A673 (cell line): ENCODE measurements at regions of chr13 and their contacts with region 1.

Region 1: GRCh38 chr13:41061075-41061913 is at the start of gene WBP4:
- DNase-seq: peak; percentile 95
- H3K4me3 ChIP-seq: peak within 1 kb of the TSS; percentile 83
- H3K27ac ChIP-seq: peak within 1 kb of the TSS; percentile 97
- H3K4me1 ChIP-seq: peaks cover 16% of the 10 kb centered on the region
- H3K27me3 ChIP-seq: no peaks in the 10 kb centered on the region
- CTCF ChIP-seq: 0 out of 2 replicates have a peak, but pooled peaks have one; percentile 19
- total RNA-seq, gene WBP4: 11.9 and 12.5 TPM in 2 replicates

Region 2: DNA sequence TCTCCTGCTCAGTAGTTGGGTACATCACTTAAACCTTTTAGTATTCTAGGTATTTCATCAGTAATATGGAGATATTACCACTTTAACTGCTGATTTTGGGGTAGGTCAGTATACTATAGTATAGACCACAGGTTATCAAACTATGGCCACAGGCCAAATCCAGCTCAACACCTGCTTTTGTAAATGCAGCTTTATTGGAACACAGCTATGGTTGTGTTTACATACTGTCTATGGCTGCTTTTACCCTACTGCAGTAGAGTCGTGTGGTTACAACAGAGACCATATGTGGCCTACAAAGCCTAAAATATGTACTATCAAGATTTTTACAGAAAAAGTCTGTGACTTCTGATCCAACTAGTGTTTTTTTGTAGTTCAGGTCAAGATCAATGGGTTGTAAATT is 1395.5 kb before region 1 on chr13:
- CTCF ChIA-PET with region 1: no interaction called
- POLR2A ChIA-PET with region 1: no interaction called
- intact Hi-C with region 1: no loop called
- DNase-seq: no peak
- H3K4me3 ChIP-seq: no peak overlapping the region
- H3K27ac ChIP-seq: no peak overlapping the region
- H3K4me1 ChIP-seq: peaks cover 8% of the 10 kb centered on the region
- H3K27me3 ChIP-seq: no peaks in the 10 kb centered on the region
- CTCF ChIP-seq: no peak

Region 3: GRCh38 chr13:40895227-40896184 is 165.8 kb before region 1 on chr13:
- CTCF ChIA-PET with region 1: no interaction called
- POLR2A ChIA-PET with region 1: no interaction called
- intact Hi-C with region 1: no loop called
- DNase-seq: no peak
- H3K4me3 ChIP-seq: no peak overlapping the region
- H3K27ac ChIP-seq: no peak overlapping the region
- H3K4me1 ChIP-seq: no peaks in the 10 kb centered on the region
- H3K27me3 ChIP-seq: no peaks in the 10 kb centered on the region
- CTCF ChIP-seq: no peak

Region 4: GRCh38 chr13:40982772-40983171 is 78.5 kb before region 1 on chr13:
- CTCF ChIA-PET with region 1: no interaction called
- POLR2A ChIA-PET with region 1: no interaction called
- intact Hi-C with region 1: loop called (anchors 2 kb)
- DNase-seq: peak; percentile 93
- H3K4me3 ChIP-seq: peak overlapping the region; percentile 50
- H3K27ac ChIP-seq: peak overlapping the region; percentile 93
- H3K4me1 ChIP-seq: peaks cover 37% of the 10 kb centered on the region
- H3K27me3 ChIP-seq: no peaks in the 10 kb centered on the region
- CTCF ChIP-seq: no peak

Region 5: GRCh38 chr13:41132512-41133152 is 71.3 kb after region 1 on chr13 and contains the start of gene KBTBD6:
- CTCF ChIA-PET with region 1: no interaction called
- POLR2A ChIA-PET with region 1: no interaction called
- intact Hi-C with region 1: loop called (anchors 5 kb)
- DNase-seq: peak; percentile 100
- H3K4me3 ChIP-seq: peak within 1 kb of the TSS; percentile 61
- H3K27ac ChIP-seq: peak within 1 kb of the TSS; percentile 77
- H3K4me1 ChIP-seq: peaks cover 9% of the 10 kb centered on the region
- H3K27me3 ChIP-seq: no peaks in the 10 kb centered on the region
- CTCF ChIP-seq: no peak
- total RNA-seq, gene KBTBD6: 14.5 and 15.7 TPM in 2 replicates

Region 6: DNA sequence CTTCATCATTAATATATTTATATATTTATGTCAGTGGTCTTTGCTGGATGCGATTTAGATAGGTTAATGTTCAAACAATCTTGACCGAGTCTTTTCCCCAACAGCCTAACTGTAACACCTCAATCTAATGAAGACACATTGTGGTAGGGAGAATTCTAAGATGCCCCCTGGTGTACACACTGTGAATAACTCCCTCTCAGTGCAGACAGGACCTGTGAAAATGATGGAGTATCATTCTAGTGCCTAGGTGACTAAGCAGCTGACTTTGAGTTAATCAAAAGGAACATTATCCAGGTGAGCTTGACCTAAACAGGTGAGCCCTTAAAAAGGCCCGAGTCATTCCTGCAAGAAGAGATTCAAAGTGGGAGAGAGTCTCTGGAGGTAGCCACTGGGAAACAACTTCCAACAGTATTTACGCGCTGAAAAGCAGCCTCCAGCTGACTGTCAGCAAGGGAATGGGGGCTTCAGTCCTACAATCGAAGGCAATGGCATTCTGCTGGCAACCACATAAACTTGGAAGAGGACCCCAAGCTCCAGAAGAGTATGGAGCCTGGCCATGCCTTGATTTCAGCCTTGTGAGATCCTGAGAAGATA is 161.1 kb after region 1 on chr13:
- CTCF ChIA-PET with region 1: no interaction called
- POLR2A ChIA-PET with region 1: no interaction called
- intact Hi-C with region 1: loop called (anchors 5 kb)
- DNase-seq: peak; percentile 66
- H3K4me3 ChIP-seq: no peak overlapping the region
- H3K27ac ChIP-seq: no peak overlapping the region
- H3K4me1 ChIP-seq: no peaks in the 10 kb centered on the region
- H3K27me3 ChIP-seq: no peaks in the 10 kb centered on the region
- CTCF ChIP-seq: peak; percentile 84